ENCODE measurements at regions of chr7 and their contacts with region 1.

Region 1: DNA sequence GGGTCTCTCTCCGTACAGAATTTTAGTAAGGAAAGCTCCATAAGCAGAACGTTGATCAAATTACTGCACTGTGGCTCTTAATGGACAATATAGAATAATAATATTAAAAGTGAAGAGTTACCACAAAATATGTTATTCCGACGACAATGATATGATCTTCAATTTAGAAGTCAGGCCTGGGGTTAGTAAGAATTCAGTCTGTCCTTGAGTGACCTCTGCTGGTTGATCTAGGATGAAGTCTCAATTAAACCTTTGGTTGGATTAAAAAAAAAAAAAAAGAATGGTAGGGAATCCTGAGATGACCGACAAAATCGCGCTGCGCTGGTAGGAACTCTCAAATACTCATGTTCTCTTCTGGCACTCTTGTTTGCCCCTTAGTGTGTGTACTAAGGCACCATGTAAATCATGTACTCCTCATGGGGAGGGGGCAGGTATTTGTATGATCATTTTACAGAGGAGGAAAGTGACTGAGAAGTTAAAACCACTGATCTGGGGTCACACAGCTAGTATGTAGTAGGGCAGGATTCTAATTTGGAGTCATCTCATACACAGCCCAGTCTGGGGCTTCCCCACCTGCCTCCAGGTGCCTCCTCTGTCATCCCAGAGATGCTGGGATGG is 161.3 kb upstream of the NPVF start:
- DNase-seq: peak; percentile 60 to 78 (median 67)
- H3K4me3 ChIP-seq: no peak overlapping the region
- H3K27ac ChIP-seq: no peak overlapping the region
- H3K4me1 ChIP-seq: no peaks in the 10 kb centered on the region
- H3K27me3 ChIP-seq: peaks cover 0 to 10% (median 8%) of the 10 kb centered on the region in 5 experiments

Region 2: GRCh38 chr7:25048444-25048834 is 341.2 kb before region 1 on chr7:
- CTCF ChIA-PET with region 1: no interaction called
- POLR2A ChIA-PET with region 1: no interaction called
- DNase-seq: no peak
- H3K4me3 ChIP-seq: no peak overlapping the region
- H3K27ac ChIP-seq: no peak overlapping the region
- H3K4me1 ChIP-seq: no peaks in the 10 kb centered on the region
- H3K27me3 ChIP-seq: no peaks in the 10 kb centered on the region

Region 3: GRCh38 chr7:25259587-25260243 is 129.9 kb before region 1 on chr7:
- CTCF ChIA-PET with region 1: interaction called, 141 read pairs
- POLR2A ChIA-PET with region 1: no interaction called
- DNase-seq: peak; percentile 79 to 85 (median 82)
- H3K4me3 ChIP-seq: no peak overlapping the region
- H3K27ac ChIP-seq: no peak overlapping the region
- H3K4me1 ChIP-seq: peaks cover 6 to 10% (median 10%) of the 10 kb centered on the region in 4 experiments
- H3K27me3 ChIP-seq: peaks cover 0 to 15% (median 6%) of the 10 kb centered on the region in 5 experiments

Region 4: GRCh38 chr7:25481891-25482290 is 92.3 kb after region 1 on chr7:
- CTCF ChIA-PET with region 1: no interaction called
- POLR2A ChIA-PET with region 1: no interaction called
- DNase-seq: no peak
- H3K4me3 ChIP-seq: no peak overlapping the region
- H3K27ac ChIP-seq: no peak overlapping the region
- H3K4me1 ChIP-seq: no peaks in the 10 kb centered on the region
- H3K27me3 ChIP-seq: no peaks in the 10 kb centered on the region

Region 5: DNA sequence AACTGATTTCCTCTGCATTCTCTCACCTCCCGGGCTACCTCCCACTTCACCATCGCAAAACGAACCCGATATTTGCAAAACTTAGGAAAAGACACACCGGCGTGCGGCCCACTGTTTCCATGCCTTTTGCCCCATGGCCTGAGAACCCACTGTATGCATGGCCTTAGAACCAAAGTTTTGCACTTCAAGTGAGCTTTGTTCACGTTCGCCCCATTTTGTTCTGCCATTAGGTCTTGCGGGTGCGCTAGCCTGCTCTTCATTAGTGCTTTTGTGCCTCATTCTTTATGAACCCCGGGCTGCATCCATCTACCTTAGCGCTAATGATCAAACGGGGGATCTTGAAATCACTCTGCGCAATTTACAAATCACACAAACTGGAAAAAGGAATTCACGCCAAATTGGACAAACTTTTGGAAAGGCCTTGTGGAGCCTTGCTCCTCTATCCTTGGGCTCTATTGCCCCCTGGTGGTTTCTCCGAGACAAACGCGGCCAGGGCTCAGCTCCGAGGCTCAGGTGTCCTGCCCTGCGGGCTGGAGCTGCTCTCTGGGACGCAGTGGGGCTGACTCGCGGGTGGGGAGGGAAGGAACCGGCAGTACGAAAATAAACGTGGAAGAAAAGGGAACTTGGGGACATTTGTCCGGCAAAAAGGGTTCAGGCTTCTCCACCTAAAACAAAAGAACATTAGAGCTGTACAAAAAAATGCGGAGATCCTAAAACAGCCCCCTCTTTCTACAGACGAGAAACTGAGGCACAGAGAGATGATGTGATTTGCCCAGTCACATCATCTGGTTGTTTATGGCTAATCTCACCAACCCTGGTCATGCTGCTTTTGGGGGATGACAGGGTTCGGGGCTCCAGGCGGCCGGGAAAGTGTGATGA is 462.0 kb after region 1 on chr7:
- CTCF ChIA-PET with region 1: interaction called, 11 read pairs
- POLR2A ChIA-PET with region 1: no interaction called
- DNase-seq: peak; percentile 66 to 77 (median 74)
- H3K4me3 ChIP-seq: peak overlapping the region in 5 of 7 experiments; percentile 12 to 52 (median 48)
- H3K27ac ChIP-seq: no peak overlapping the region
- H3K4me1 ChIP-seq: peaks cover 1 to 23% (median 20%) of the 10 kb centered on the region in 4 experiments
- H3K27me3 ChIP-seq: peaks cover 24 to 91% (median 47%) of the 10 kb centered on the region in 5 experiments